ENCODE measurements at regions of chr1 and their contacts with region 1.

Region 1: GRCh38 chr1:235866913-235867845 is 473 bp upstream of the LYST start:
- DNase-seq: peak; percentile 95
- H3K4me3 ChIP-seq: peak overlapping the region; percentile 92 to 94 (median 93)
- H3K27ac ChIP-seq: peak overlapping the region; percentile 45
- H3K4me1 ChIP-seq: peaks cover 25% of the 10 kb centered on the region
- H3K27me3 ChIP-seq: no peaks in the 10 kb centered on the region
- CTCF ChIP-seq: no peak

Region 2: GRCh38 chr1:235902638-235903542 is 35.7 kb after region 1 on chr1:
- CTCF ChIA-PET with region 1: no interaction called
- dilution Hi-C with region 1: no loop called
- in situ Hi-C with region 1: no loop called
- intact Hi-C with region 1: loop called (anchors 1 kb)
- DNase-seq: peak; percentile 93
- H3K4me3 ChIP-seq: peak overlapping the region in 1 of 3 experiments; percentile 23
- H3K27ac ChIP-seq: peak overlapping the region; percentile 55
- H3K4me1 ChIP-seq: peaks cover 36% of the 10 kb centered on the region
- H3K27me3 ChIP-seq: no peaks in the 10 kb centered on the region
- CTCF ChIP-seq: no peak

Region 3: GRCh38 chr1:235917267-235917811 is 50.2 kb after region 1 on chr1:
- CTCF ChIA-PET with region 1: interaction called, 7 read pairs
- dilution Hi-C with region 1: no loop called
- in situ Hi-C with region 1: no loop called
- intact Hi-C with region 1: loop called (anchors 2 kb)
- DNase-seq: peak; percentile 100
- H3K4me3 ChIP-seq: no peak overlapping the region
- H3K27ac ChIP-seq: peak overlapping the region; percentile 96
- H3K4me1 ChIP-seq: peaks cover 63% of the 10 kb centered on the region
- H3K27me3 ChIP-seq: no peaks in the 10 kb centered on the region
- CTCF ChIP-seq: no peak

Region 4: DNA sequence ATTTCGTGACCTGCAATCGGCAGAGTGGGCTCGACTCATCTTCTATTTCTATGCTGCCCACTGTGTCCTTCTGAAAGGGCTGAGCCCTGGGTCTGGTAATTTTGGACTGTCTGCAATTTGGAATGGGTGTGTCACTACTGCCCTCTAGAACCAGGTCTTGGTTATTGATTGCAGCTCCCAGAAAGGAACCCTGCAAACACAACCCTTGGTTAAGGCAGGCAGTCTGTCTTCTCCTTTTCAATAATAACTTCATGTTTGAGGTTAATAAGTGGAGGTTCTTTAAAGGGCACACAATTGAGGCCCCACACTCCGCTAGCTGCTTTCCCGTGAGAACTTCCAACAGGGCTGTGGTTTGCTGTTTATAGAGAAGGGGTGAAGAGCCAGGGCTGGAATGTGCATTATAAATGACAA is 79.4 kb after region 1 on chr1:
- CTCF ChIA-PET with region 1: no interaction called
- dilution Hi-C with region 1: no loop called
- in situ Hi-C with region 1: no loop called
- intact Hi-C with region 1: loop called (anchors 1 kb)
- DNase-seq: peak; percentile 45
- H3K4me3 ChIP-seq: no peak overlapping the region
- H3K27ac ChIP-seq: no peak overlapping the region
- H3K4me1 ChIP-seq: peaks cover 32% of the 10 kb centered on the region
- H3K27me3 ChIP-seq: no peaks in the 10 kb centered on the region
- CTCF ChIP-seq: peak in 1 of 2 donors; percentile 51

Region 5: DNA sequence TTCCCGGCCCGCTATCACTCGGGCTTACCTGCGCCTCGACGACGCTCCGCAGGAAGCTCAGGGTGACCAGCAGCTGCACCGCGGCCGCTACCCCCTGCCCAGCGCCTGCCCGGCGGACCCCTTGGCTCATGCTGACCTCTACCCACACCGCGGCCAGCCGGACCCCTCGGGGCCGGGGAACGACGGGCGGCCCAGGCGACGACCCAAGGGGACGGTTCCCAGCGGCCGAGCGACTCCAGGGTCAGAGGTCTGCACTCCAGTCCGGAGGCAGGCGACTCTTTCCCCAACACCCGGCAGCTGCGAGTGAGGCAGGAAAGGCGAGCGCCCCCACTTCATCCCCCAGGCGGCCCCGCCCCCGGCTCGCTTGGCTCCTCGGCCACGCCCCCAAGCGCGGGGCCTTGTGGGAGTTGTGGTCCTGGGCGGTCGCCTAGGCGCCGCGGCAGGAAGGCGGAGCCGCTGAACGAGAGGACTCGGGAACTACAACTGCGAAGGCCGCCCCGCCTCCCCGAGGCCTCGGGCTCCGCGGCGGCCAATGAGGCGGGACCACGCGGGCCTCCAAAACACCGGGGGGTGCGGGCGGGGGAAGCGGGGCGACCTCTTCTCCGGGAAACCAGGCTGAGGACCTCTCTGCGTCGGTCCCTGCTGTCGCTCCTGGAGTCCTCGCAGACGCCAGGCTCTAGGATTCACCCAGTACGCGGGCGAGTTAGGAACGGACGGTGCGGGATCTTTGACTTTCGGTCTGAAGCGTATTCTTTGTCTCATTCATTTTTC is 414.7 kb after region 1 on chr1 and contains the start of gene ERO1B:
- CTCF ChIA-PET with region 1: interaction called, 11 read pairs
- dilution Hi-C with region 1: no loop called
- in situ Hi-C with region 1: no loop called
- intact Hi-C with region 1: no loop called
- DNase-seq: peak; percentile 93
- H3K4me3 ChIP-seq: peak within 1 kb of the TSS; percentile 54 to 90 (median 74)
- H3K27ac ChIP-seq: peak within 1 kb of the TSS; percentile 25
- H3K4me1 ChIP-seq: peaks cover 4% of the 10 kb centered on the region
- H3K27me3 ChIP-seq: no peaks in the 10 kb centered on the region
- CTCF ChIP-seq: peak in 1 of 2 donors; percentile 9
- total RNA-seq, gene ERO1B: 3.5 to 4.0 TPM